ENCODE measurements at regions of chr18 and their contacts with region 1.

Region 1: GRCh38 chr18:58117786-58118403 is 73.9 kb downstream of the NEDD4L start:
- DNase-seq: no peak
- ATAC-seq: no peak
- H3K4me3 ChIP-seq: no peak overlapping the region
- H3K4me3 Mint-ChIP-seq: no peak overlapping the region
- H3K27ac ChIP-seq: no peak overlapping the region
- H3K27ac Mint-ChIP-seq: no peak overlapping the region
- H3K4me1 ChIP-seq: no peaks in the 10 kb centered on the region
- H3K4me1 Mint-ChIP-seq: peaks cover 0 to 8% (median 2%) of the 10 kb centered on the region in 3 donors
- H3K27me3 ChIP-seq: peaks cover 0 to 4% of the 10 kb centered on the region in 2 experiments
- H3K27me3 Mint-ChIP-seq: peaks cover 0 to 5% of the 10 kb centered on the region in 2 donors

Region 2: GRCh38 chr18:57881818-57882413 is 236.0 kb before region 1 on chr18:
- CTCF ChIA-PET with region 1: interaction called, 14 to 17 read pairs
- POLR2A ChIA-PET with region 1: no interaction called
- DNase-seq: peak in 34 of 35 experiments; percentile 8 to 67 (median 30)
- ATAC-seq: peak; percentile 60 to 73 (median 63)
- H3K4me3 ChIP-seq: no peak overlapping the region
- H3K4me3 Mint-ChIP-seq: no peak overlapping the region
- H3K27ac ChIP-seq: no peak overlapping the region
- H3K27ac Mint-ChIP-seq: no peak overlapping the region
- H3K4me1 ChIP-seq: peaks cover 0 to 4% of the 10 kb centered on the region in 2 experiments
- H3K4me1 Mint-ChIP-seq: peaks cover 0 to 5% (median 0%) of the 10 kb centered on the region in 3 donors
- H3K27me3 ChIP-seq: peaks cover 0 to 7% of the 10 kb centered on the region in 2 experiments
- H3K27me3 Mint-ChIP-seq: peaks cover 7 to 20% of the 10 kb centered on the region in 2 donors

Region 3: GRCh38 chr18:57931038-57931437 is 186.9 kb before region 1 on chr18:
- CTCF ChIA-PET with region 1: no interaction called
- POLR2A ChIA-PET with region 1: no interaction called
- DNase-seq: no peak
- ATAC-seq: no peak
- H3K4me3 ChIP-seq: no peak overlapping the region
- H3K4me3 Mint-ChIP-seq: no peak overlapping the region
- H3K27ac ChIP-seq: no peak overlapping the region
- H3K27ac Mint-ChIP-seq: no peak overlapping the region
- H3K4me1 ChIP-seq: no peaks in the 10 kb centered on the region
- H3K4me1 Mint-ChIP-seq: peaks cover 2 to 6% (median 3%) of the 10 kb centered on the region in 3 donors
- H3K27me3 ChIP-seq: no peaks in the 10 kb centered on the region
- H3K27me3 Mint-ChIP-seq: no peaks in the 10 kb centered on the region

Region 4: GRCh38 chr18:58051765-58052460 is 66.0 kb before region 1 on chr18:
- CTCF ChIA-PET with region 1: interaction called in 1 of 2 experiments, 11 read pairs
- POLR2A ChIA-PET with region 1: no interaction called
- DNase-seq: peak in 1 of 35 experiments; percentile 18
- ATAC-seq: peak in 2 of 4 experiments; percentile 37 to 45
- H3K4me3 ChIP-seq: no peak overlapping the region
- H3K4me3 Mint-ChIP-seq: no peak overlapping the region
- H3K27ac ChIP-seq: no peak overlapping the region
- H3K27ac Mint-ChIP-seq: no peak overlapping the region
- H3K4me1 ChIP-seq: no peaks in the 10 kb centered on the region
- H3K4me1 Mint-ChIP-seq: peaks cover 4 to 8% (median 6%) of the 10 kb centered on the region in 3 donors
- H3K27me3 ChIP-seq: no peaks in the 10 kb centered on the region
- H3K27me3 Mint-ChIP-seq: peaks cover 0 to 5% of the 10 kb centered on the region in 2 donors

Region 5: DNA sequence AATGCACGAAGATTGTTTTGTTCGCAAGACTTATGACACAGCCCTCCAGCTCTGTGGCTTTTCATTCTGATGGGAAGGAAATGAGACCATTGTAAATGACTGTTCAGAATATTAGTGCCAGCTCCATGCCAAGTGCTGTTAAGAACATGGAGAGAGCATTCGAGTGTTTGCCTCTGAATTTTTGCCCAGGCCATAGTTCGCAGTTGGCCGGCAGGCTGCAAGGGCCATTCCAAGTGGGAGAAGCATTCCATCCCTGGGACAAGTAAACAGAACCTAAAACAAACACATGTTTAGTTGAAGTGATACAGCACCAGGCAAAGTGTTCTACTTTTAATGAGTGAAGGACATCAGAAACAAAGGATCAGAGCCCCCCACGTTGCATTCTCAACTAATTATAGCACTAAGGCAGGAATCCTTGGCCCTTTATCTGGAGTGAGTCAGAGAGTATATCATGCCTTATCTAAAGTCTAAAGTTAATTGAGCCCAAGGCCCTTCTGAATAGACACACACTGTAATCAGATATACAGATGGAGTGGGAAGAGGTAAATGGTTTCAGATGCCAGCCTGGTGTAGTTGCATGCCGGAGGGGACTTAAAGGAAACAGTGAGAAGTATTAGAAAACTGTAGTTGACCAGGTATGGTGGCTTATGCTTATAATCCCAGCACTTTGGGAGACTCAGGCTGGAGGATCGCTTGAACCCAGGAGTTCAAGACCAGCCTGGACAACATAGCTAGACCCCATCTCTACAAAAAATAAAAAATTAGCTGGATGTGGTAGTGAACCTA is 20.6 kb before region 1 on chr18:
- CTCF ChIA-PET with region 1: no interaction called
- POLR2A ChIA-PET with region 1: no interaction called
- DNase-seq: no peak
- ATAC-seq: no peak
- H3K4me3 ChIP-seq: no peak overlapping the region
- H3K4me3 Mint-ChIP-seq: no peak overlapping the region
- H3K27ac ChIP-seq: no peak overlapping the region
- H3K27ac Mint-ChIP-seq: no peak overlapping the region
- H3K4me1 ChIP-seq: no peaks in the 10 kb centered on the region
- H3K4me1 Mint-ChIP-seq: no peaks in the 10 kb centered on the region
- H3K27me3 ChIP-seq: peaks cover 0 to 4% of the 10 kb centered on the region in 2 experiments
- H3K27me3 Mint-ChIP-seq: peaks cover 0 to 11% of the 10 kb centered on the region in 2 donors

Measured in T-cell (primary cell).